PC-9 (cell line): ENCODE measurements at regions of chr16 and their contacts with region 1.

Region 1: DNA sequence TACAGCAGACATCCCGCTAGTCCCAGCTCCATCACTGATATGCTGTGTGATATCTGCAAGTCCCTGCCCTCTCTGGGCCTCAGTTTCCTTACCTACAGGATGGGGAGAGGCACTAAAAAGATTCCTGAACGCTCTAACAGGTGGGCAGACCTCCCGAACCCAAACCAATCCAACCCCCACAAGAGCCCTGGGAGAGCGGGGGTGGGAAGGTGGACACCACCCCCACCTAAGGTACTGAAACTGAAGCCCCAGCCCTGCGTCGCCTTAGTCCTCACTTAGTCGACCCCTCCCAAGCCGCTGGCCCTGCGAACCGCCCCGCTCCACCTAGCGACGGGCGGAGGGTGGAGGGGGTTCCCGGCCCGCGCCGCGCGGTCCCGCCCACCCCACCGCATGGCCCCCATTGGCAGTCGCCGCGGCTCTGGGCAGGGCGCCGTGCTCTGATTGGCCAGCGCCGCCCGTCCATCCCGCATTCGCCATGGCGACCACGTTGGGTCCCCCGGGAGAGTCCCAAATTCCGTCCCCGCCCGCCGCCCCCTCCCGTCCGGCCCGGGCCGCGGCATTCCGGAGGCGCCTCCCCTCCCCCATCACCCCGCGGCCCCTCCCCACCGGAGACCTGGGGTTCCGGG is 578 bp downstream of the CCDC102A start:
- DNase-seq: peak; percentile 62 to 91
- H3K4me3 ChIP-seq: peak overlapping the region; percentile 58
- H3K27ac ChIP-seq: no peak overlapping the region
- H3K4me1 ChIP-seq: no peaks in the 10 kb centered on the region; the same call in 1 of the 2 replicates
- H3K27me3 ChIP-seq: 0 out of 2 replicates have a peak, but pooled peaks cover 7% of the 10 kb centered on the region
- CTCF ChIP-seq: no peak

Region 2: DNA sequence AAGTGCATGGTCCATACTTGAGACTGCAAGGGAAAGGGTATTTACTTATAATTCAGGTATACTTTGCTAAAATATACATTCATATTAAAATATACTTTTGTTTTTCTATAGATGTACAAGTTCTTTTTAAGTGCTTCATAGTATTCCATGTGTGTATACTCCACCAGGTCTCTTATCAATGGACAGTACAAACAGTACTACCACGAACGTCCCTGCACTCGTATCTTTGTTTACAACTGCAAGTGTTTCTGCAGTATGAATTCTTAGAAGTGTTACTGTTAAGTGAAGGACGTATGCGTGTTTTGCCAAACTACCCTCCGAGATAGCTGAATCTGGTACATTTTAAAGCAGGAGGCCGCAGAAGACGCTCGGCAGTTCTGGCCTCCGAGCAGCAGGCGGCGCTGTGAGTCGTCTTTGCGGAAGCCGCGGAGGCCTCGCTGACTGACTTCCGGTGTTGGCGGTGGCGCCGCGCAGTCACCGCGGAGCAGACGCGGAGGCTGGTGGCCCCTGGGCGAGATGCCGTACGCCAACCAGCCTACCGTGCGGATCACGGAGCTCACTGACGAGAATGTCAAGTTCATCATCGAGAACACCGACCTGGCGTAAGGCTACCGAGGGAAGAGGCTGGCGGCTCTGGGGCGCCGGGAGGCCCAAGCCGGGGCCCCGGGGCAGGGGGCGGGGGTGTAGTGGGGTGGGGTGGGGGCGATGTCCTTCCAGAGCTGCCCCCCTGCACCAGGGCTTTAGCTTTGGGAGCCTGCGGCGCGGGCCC is 73.4 kb before region 1 on chr16 and contains the start of gene POLR2C:
- CTCF ChIA-PET with region 1: no interaction called
- POLR2A ChIA-PET with region 1: interaction called, 10 read pairs
- intact Hi-C with region 1: no loop called
- DNase-seq: peak; percentile 64 to 84
- H3K4me3 ChIP-seq: peak within 1 kb of the TSS; percentile 93
- H3K27ac ChIP-seq: no peak within 1 kb of the TSS
- H3K4me1 ChIP-seq: peaks cover 12% of the 10 kb centered on the region
- H3K27me3 ChIP-seq: no peaks in the 10 kb centered on the region
- CTCF ChIP-seq: peak; percentile 92
- total RNA-seq, gene POLR2C: 47.3 and 47.8 TPM in 2 replicates

Region 3: GRCh38 chr16:57485916-57486857 is 49.6 kb before region 1 on chr16 and contains the start of gene DOK4:
- CTCF ChIA-PET with region 1: no interaction called
- POLR2A ChIA-PET with region 1: no interaction called
- intact Hi-C with region 1: loop called (anchors 1 kb)
- DNase-seq: peak in 1 of 2 experiments; percentile 77
- H3K4me3 ChIP-seq: peak within 1 kb of the TSS; percentile 75
- H3K27ac ChIP-seq: no peak within 1 kb of the TSS
- H3K4me1 ChIP-seq: no peaks in the 10 kb centered on the region
- H3K27me3 ChIP-seq: no peaks in the 10 kb centered on the region
- CTCF ChIP-seq: no peak
- total RNA-seq, gene DOK4: 27.4 and 38.7 TPM in 2 replicates

Region 4: GRCh38 chr16:57564571-57565270 is 28.9 kb after region 1 on chr16:
- CTCF ChIA-PET with region 1: no interaction called
- POLR2A ChIA-PET with region 1: no interaction called
- intact Hi-C with region 1: loop called (anchors 1 kb)
- DNase-seq: no peak
- H3K4me3 ChIP-seq: no peak overlapping the region
- H3K27ac ChIP-seq: no peak overlapping the region
- H3K4me1 ChIP-seq: peaks cover 9% of the 10 kb centered on the region; the same call in 1 of the 2 replicates
- H3K27me3 ChIP-seq: 0 out of 2 replicates have a peak, but pooled peaks cover 5% of the 10 kb centered on the region
- CTCF ChIP-seq: no peak